SK-N-SH (cell line): ENCODE measurements at regions of chr1 and their contacts with region 1.

Region 1: GRCh38 chr1:10209905-10210810 is at the start of gene KIF1B:
- DNase-seq: peak; percentile 100
- H3K4me3 ChIP-seq: peak within 1 kb of the TSS; percentile 85 to 97
- H3K27ac ChIP-seq: peak within 1 kb of the TSS; percentile 91 to 97
- H3K4me1 ChIP-seq: peaks cover 8 to 9% of the 10 kb centered on the region in 2 experiments; a peak in 2 of 4 replicates
- H3K27me3 ChIP-seq: no peaks in the 10 kb centered on the region
- CTCF ChIP-seq: peak; percentile 95
- EP300 ChIP-seq: no peak
- RAD21 ChIP-seq: peak; percentile 44
- polyA plus RNA-seq, gene KIF1B: 6.8 and 8.8 TPM in 2 replicates

Region 2: GRCh38 chr1:9539165-9539828 is 670.9 kb before region 1 on chr1 and contains the start of gene SLC25A33:
- CTCF ChIA-PET with region 1: no interaction called
- POLR2A ChIA-PET with region 1: no interaction called
- DNase-seq: peak; percentile 99
- H3K4me3 ChIP-seq: peak within 1 kb of the TSS; percentile 67 to 78
- H3K27ac ChIP-seq: peak within 1 kb of the TSS; percentile 60 to 84
- H3K4me1 ChIP-seq: peaks cover 0 to 7% of the 10 kb centered on the region in 2 experiments; a peak in 2 of 4 replicates
- H3K27me3 ChIP-seq: no peaks in the 10 kb centered on the region
- CTCF ChIP-seq: no peak
- EP300 ChIP-seq: no peak
- RAD21 ChIP-seq: no peak
- polyA plus RNA-seq, gene SLC25A33: 4.8 and 5.0 TPM in 2 replicates

Region 3: GRCh38 chr1:9942939-9943788 is 267.0 kb before region 1 on chr1 and contains the starts of genes LZIC and NMNAT1:
- CTCF ChIA-PET with region 1: interaction called, 12 read pairs
- POLR2A ChIA-PET with region 1: no interaction called
- DNase-seq: peak; percentile 95
- H3K4me3 ChIP-seq: peak within 1 kb of the TSS; percentile 72 to 88
- H3K27ac ChIP-seq: peak within 1 kb of the TSS; percentile 78 to 81
- H3K4me1 ChIP-seq: peaks cover 3 to 4% of the 10 kb centered on the region in 2 experiments; a peak in 1 of 4 replicates
- H3K27me3 ChIP-seq: no peaks in the 10 kb centered on the region
- CTCF ChIP-seq: no peak
- EP300 ChIP-seq: no peak
- RAD21 ChIP-seq: no peak
- polyA plus RNA-seq, gene LZIC: 9.6 and 10.2 TPM in 2 replicates
- polyA plus RNA-seq, gene NMNAT1: 7.0 and 8.7 TPM in 2 replicates

Region 4: GRCh38 chr1:10228528-10228927 is 18.4 kb after region 1 on chr1:
- CTCF ChIA-PET with region 1: interaction called, 12 read pairs
- POLR2A ChIA-PET with region 1: no interaction called
- DNase-seq: no peak
- H3K4me3 ChIP-seq: no peak overlapping the region
- H3K27ac ChIP-seq: no peak overlapping the region
- H3K4me1 ChIP-seq: 0 out of 4 replicates have a peak, but pooled peaks cover 0 to 6% of the 10 kb centered on the region in 2 experiments
- H3K27me3 ChIP-seq: no peaks in the 10 kb centered on the region
- CTCF ChIP-seq: no peak
- EP300 ChIP-seq: no peak
- RAD21 ChIP-seq: no peak

Region 5: GRCh38 chr1:10286244-10286643 is 76.1 kb after region 1 on chr1:
- CTCF ChIA-PET with region 1: interaction called, 10 read pairs
- POLR2A ChIA-PET with region 1: no interaction called
- DNase-seq: no peak
- H3K4me3 ChIP-seq: no peak overlapping the region
- H3K27ac ChIP-seq: peak overlapping the region in 1 of 2 experiments; percentile 16; a peak in 1 of 4 replicates
- H3K4me1 ChIP-seq: peaks cover 3 to 21% of the 10 kb centered on the region in 2 experiments; a peak in 3 of 4 replicates
- H3K27me3 ChIP-seq: no peaks in the 10 kb centered on the region
- CTCF ChIP-seq: no peak
- EP300 ChIP-seq: no peak
- RAD21 ChIP-seq: no peak

Region 6: GRCh38 chr1:10430216-10431069 is 220.3 kb after region 1 on chr1 and contains the start of gene CENPS:
- CTCF ChIA-PET with region 1: interaction called, 17 read pairs
- POLR2A ChIA-PET with region 1: interaction called, 3 read pairs
- DNase-seq: peak; percentile 98
- H3K4me3 ChIP-seq: peak within 1 kb of the TSS; percentile 68 to 82
- H3K27ac ChIP-seq: peak within 1 kb of the TSS; percentile 67 to 85
- H3K4me1 ChIP-seq: peaks cover 3 to 9% of the 10 kb centered on the region in 2 experiments; a peak in 1 of 4 replicates
- H3K27me3 ChIP-seq: no peaks in the 10 kb centered on the region
- CTCF ChIP-seq: peak; percentile 77
- EP300 ChIP-seq: no peak
- RAD21 ChIP-seq: peak; percentile 63
- polyA plus RNA-seq, gene CENPS: 16.6 and 20.0 TPM in 2 replicates